ENCODE measurements at regions of chr17 and their contacts with region 1.

Region 1: DNA sequence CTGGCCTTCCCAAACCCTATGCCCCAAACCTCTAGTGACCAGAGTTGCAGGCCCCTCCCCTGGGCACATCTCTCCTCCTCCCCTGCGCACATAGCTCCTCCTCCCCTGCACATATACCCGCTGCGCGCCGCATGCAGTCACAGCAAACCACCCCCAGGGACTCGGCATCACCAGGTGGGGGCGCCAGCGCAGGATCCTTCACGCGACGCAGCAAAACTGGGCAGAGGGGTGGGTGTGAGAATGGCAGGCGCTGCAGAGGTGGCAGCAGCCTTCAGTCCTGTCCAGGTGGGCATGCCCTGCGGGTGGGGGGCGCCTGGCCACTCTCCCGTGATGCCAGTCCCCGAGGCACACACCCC is 5.6 kb downstream of the CORO6 start:
- DNase-seq: peak; percentile 98
- ATAC-seq: peak; percentile 82
- H3K4me3 Mint-ChIP-seq: peak overlapping the region; percentile 75
- H3K27ac Mint-ChIP-seq: peak overlapping the region; percentile 89
- H3K4me1 Mint-ChIP-seq: peaks cover 47% of the 10 kb centered on the region
- H3K27me3 Mint-ChIP-seq: peaks cover 2% of the 10 kb centered on the region

Region 2: GRCh38 chr17:29389982-29390850 is 226.9 kb before region 1 on chr17 and contains the start of gene TAOK1:
- CTCF ChIA-PET with region 1: interaction called, 3 read pairs
- POLR2A ChIA-PET with region 1: no interaction called
- intact Hi-C with region 1: loop called in 1 of 2 experiments (anchors 1 kb)
- DNase-seq: peak; percentile 99
- ATAC-seq: peak; percentile 95
- H3K4me3 Mint-ChIP-seq: peak within 1 kb of the TSS; percentile 81
- H3K27ac Mint-ChIP-seq: peak within 1 kb of the TSS; percentile 94
- H3K4me1 Mint-ChIP-seq: peaks cover 36% of the 10 kb centered on the region
- H3K27me3 Mint-ChIP-seq: no peaks in the 10 kb centered on the region
- total RNA-seq, gene TAOK1: 29.9 to 35.1 TPM

Region 3: DNA sequence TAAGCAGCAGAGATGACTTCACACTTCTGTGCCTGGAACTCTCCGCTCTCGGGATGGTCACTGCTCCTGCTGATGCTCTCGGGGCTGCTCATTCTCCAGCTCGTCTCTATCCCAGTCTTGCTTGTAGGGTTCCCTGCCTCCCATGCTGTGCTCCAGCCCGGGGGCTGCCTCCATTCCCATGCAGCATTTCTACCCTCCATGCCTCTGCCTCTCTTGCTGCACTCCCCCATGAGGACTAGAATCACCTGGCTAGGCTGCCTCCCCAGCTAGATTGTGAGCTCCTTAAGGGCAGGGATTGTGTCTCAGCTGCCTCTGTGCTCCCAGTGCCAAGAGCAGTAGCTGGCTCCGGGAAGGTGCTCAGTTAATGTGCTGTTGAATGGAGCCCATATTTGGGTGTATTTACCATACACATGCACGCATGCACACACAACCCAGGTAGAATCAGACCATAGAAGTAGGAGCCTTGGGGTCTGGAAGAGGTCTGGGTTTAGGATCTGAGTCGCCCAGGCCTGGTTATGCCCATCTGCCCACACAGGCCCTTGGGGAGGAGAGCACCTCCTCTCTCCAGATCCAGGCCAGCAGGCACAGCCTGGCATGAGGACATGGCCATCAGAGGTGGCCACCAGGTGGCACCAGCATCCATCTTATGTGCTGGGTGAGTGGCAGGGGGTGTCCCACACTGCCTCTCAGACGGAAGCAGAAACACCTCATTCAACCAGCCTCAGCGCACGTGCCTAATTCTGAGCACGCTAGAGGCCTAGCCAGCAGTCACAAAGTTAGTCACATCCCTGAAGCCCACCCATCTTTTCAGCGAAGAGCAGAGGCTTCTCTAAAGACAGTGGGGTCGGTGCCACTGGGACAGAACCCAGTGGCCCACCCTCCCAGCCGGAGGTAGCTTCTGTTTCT is 37.0 kb before region 1 on chr17:
- CTCF ChIA-PET with region 1: interaction called, 93 read pairs
- POLR2A ChIA-PET with region 1: interaction called, 3 read pairs
- intact Hi-C with region 1: loop called (anchors 1 kb)
- DNase-seq: peak; percentile 96
- ATAC-seq: peak; percentile 97
- H3K4me3 Mint-ChIP-seq: no peak overlapping the region
- H3K27ac Mint-ChIP-seq: peak overlapping the region; percentile 72
- H3K4me1 Mint-ChIP-seq: peaks cover 18% of the 10 kb centered on the region
- H3K27me3 Mint-ChIP-seq: no peaks in the 10 kb centered on the region

Region 4: GRCh38 chr17:29664743-29665480 is 47.8 kb after region 1 on chr17:
- CTCF ChIA-PET with region 1: interaction called, 12 read pairs
- POLR2A ChIA-PET with region 1: no interaction called
- intact Hi-C with region 1: no loop called
- DNase-seq: peak; percentile 18
- ATAC-seq: peak; percentile 94
- H3K4me3 Mint-ChIP-seq: no peak overlapping the region
- H3K27ac Mint-ChIP-seq: peak overlapping the region; percentile 85
- H3K4me1 Mint-ChIP-seq: peaks cover 32% of the 10 kb centered on the region
- H3K27me3 Mint-ChIP-seq: no peaks in the 10 kb centered on the region

Region 5: GRCh38 chr17:29682054-29682453 is 65.0 kb after region 1 on chr17:
- CTCF ChIA-PET with region 1: no interaction called
- POLR2A ChIA-PET with region 1: no interaction called
- intact Hi-C with region 1: no loop called
- DNase-seq: no peak
- ATAC-seq: peak; percentile 32
- H3K4me3 Mint-ChIP-seq: no peak overlapping the region
- H3K27ac Mint-ChIP-seq: peak overlapping the region; percentile 45
- H3K4me1 Mint-ChIP-seq: peaks cover 24% of the 10 kb centered on the region
- H3K27me3 Mint-ChIP-seq: no peaks in the 10 kb centered on the region

Region 6: DNA sequence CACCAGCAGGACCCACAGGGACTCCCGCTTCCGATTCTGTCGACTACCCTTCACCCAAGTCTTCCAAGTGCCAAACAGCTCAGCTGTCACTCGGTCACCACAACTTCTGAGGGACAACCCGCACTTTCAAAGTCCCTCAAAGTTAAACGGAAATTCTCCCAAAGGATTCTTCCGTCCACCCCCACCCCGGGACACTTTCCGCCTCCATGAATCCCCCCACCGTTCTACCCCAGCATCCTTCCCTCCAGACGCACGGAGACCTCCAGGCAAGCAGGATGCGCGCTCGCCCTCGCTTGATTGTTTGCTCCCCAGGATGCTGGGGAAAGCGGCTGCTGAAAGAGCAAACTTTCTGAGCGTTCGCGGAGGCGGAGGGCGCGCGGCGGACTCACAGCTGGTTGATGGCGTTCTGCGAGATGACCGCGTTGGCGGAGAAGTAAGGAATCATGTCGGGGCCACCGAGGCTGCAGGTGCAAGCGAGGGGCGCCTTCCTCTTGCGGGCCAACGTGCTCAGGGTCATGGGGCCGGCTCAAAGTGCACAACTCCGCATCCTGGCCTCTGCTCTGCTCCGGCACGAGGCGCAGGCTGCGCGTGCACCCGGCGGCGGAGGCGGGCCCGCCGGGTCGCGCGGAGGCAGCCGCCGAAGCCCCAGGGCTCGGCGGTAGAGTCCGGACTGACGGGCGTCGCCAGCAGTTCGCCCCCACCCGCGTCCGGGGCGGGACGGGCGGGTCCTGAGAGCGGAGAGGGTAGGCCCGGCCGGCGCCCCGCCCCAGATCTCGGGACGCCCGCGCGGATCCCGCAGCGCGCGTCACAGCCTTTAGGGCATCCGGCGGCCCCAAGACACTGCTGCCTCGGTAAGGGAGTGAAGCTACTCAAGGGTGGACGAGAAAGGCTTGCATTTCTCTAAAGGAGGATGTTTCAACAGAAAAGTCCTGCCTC is 143.9 kb after region 1 on chr17:
- CTCF ChIA-PET with region 1: interaction called, 16 read pairs
- POLR2A ChIA-PET with region 1: interaction called, 7 read pairs
- intact Hi-C with region 1: loop called (anchors 1 to 5 kb)
- DNase-seq: peak; percentile 97
- ATAC-seq: peak; percentile 89
- H3K4me3 Mint-ChIP-seq: peak overlapping the region; percentile 97
- H3K27ac Mint-ChIP-seq: peak overlapping the region; percentile 97
- H3K4me1 Mint-ChIP-seq: peaks cover 30% of the 10 kb centered on the region
- H3K27me3 Mint-ChIP-seq: no peaks in the 10 kb centered on the region

Region 7: DNA sequence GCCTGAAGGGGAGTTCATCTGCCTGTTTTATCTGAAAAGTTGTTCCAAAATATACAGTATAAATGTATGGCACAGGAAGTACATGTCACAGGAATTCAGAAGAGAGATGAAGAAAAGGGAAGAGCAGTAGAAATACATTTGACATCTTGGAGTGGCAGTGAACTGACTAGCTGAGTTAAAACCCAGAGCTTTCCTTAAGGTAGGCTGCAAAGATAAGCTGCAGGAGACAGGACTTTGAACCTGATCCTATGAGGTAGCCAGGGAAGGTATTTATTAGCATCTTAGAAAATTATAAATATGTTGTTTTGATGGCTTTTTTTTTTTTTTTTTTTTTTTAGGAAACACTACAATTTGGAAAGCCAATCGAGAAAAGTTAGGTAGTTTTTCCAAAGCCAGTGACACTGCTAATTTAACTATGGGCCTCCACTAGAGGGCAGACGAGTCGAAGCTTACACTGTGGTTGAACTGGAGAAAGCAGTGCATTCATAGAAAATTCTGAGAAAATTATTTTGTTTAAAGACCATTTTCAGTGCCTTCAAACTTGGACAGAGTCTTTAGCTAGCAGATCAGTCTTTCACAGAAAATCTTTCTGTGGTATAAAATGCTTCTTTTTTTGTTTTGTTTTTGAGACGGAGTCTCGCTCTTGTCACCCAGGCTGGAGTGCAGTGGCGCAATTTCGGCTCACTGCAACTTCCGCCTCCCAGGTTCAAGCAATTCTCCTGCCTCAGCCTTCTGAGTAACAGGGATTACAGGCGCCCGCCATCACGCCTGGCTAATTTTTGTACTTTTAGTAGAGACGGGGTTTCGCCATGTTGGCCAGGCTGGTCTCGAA is 190.6 kb after region 1 on chr17:
- CTCF ChIA-PET with region 1: interaction called, 11 read pairs
- POLR2A ChIA-PET with region 1: no interaction called
- intact Hi-C with region 1: no loop called
- DNase-seq: peak; percentile 83
- ATAC-seq: peak; percentile 74
- H3K4me3 Mint-ChIP-seq: no peak overlapping the region
- H3K27ac Mint-ChIP-seq: no peak overlapping the region
- H3K4me1 Mint-ChIP-seq: peaks cover 15% of the 10 kb centered on the region
- H3K27me3 Mint-ChIP-seq: no peaks in the 10 kb centered on the region